ENCODE measurements at regions of chr2 and their contacts with region 1.

Region 1: DNA sequence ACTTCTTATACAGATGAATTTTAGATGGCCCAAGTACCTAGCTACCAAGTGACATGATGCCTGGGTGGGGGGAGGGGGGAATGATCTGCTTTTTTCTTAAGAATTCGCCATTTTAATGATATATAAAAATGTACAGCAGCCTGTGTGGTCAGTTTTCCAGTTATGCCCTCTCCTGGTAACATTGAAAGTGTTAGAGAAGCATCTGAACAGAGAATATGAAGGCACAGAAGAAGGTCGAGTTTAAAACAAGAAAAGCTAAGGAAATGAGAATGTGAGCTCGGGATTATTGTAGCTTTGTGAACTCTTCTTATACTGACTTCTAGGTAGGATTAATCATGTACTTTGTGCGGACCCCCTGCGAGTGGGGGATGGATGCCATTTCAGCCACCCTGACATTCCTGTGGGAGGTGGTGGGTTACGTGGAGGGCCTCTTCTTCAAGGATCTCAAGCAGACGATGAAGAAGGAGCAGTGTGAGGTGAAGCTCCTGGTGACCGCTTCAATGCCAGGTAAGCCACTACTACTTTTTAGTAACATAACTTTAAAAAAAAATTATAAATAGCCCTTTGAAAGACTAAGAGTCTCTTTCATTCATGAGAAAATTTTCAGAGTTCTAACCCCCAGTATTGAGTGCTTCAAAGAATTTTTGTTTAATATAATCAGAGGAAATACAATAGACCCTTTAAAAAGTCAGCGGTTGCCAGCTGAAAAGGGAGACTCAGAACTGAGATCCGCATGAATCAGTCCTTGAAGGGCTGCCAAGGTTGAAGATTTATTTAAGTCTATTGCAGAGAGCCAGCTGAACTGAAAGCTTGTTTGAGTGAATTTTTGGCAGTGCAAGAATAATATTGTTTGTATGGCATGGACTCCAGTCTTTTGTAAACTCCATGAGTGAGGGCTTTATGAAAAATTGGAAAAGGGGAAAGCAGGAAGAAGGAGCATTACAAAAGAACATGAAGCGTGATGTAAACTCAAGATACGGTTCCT is 68.6 kb upstream of the RPE start:
- DNase-seq: peak; percentile 60
- H3K4me3 ChIP-seq: peak overlapping the region in 2 of 3 experiments; percentile 4 to 12
- H3K27ac ChIP-seq: no peak overlapping the region
- H3K4me1 ChIP-seq: no peaks in the 10 kb centered on the region
- H3K27me3 ChIP-seq: peaks cover 2% of the 10 kb centered on the region
- CTCF ChIP-seq: peak in 1 of 2 donors; percentile 8

Region 2: DNA sequence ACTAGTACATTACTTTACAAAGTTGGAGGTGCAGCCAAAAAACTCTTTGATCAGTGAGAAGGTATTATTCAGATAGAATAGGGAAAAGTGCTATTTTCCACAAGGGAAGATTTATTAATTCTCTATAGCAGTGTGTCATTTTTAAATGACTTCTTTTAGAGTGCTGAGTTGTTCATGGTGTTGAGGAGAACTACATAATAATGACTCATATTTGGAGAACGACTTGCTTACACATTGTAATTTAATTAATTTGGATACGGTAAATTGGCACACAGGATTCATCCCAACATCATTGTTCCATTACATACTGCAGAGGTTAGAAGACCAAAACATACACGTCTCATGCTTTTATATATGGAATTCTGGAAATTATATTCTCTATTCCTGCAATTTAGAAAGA is 532.0 kb before region 1 on chr2:
- CTCF ChIA-PET with region 1: no interaction called
- dilution Hi-C with region 1: no loop called
- in situ Hi-C with region 1: no loop called
- intact Hi-C with region 1: no loop called
- DNase-seq: no peak
- H3K4me3 ChIP-seq: no peak overlapping the region
- H3K27ac ChIP-seq: no peak overlapping the region
- H3K4me1 ChIP-seq: no peaks in the 10 kb centered on the region
- H3K27me3 ChIP-seq: no peaks in the 10 kb centered on the region
- CTCF ChIP-seq: no peak

Region 3: DNA sequence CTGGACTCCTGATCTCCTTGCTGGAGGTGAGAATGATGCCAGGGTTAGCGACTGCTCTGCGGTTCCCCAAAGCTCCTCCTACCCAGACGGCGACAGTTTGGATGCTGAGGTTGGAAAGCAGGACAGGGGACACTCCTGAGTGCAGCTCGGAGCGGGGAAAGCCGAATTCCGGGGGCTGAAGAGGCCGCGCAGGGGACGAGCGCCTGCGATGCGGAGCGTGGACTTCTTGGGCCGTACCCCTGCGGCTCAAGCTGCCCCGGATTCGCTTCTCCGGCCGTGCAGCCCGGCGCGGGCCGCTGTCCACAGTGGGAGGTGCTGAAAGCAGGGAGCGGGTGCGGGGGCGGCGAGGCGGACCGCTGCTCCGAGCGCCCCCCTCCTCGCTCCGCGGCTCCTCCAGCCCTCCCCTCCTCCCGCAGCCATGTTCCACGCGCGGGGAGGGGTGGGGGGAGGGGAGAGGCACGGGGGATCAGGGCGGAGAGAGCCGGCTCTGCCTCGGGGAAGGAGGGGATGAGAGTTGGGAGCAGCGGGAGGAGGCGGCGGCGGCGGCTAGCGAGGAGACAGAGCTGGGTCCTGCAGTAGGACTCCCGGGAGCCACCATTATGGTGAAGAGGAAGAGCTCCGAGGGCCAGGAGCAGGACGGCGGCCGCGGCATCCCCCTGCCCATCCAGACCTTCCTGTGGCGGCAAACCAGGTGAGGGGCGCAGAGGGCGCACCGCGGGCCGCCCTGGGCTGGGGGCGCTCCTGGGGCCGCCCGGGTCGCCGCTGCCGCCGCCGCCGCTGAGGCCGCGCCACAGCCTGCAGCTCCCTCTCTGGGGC is 162.1 kb before region 1 on chr2 and contains the start of gene UNC80:
- CTCF ChIA-PET with region 1: no interaction called
- dilution Hi-C with region 1: no loop called
- in situ Hi-C with region 1: no loop called
- intact Hi-C with region 1: loop called (anchors 10 kb)
- DNase-seq: peak; percentile 60
- H3K4me3 ChIP-seq: peak within 1 kb of the TSS; percentile 18 to 39 (median 24)
- H3K27ac ChIP-seq: no peak within 1 kb of the TSS
- H3K4me1 ChIP-seq: peaks cover 4% of the 10 kb centered on the region
- H3K27me3 ChIP-seq: peaks cover 2% of the 10 kb centered on the region
- CTCF ChIP-seq: no peak
- total RNA-seq, gene UNC80: 0.02 to 2.5 TPM

Region 4: GRCh38 chr2:210009126-210009525 is 75.3 kb after region 1 on chr2:
- CTCF ChIA-PET with region 1: no interaction called
- dilution Hi-C with region 1: no loop called
- in situ Hi-C with region 1: no loop called
- intact Hi-C with region 1: no loop called
- DNase-seq: no peak
- H3K4me3 ChIP-seq: no peak overlapping the region
- H3K27ac ChIP-seq: no peak overlapping the region
- H3K4me1 ChIP-seq: peaks cover 8% of the 10 kb centered on the region
- H3K27me3 ChIP-seq: no peaks in the 10 kb centered on the region
- CTCF ChIP-seq: no peak